ENCODE measurements at regions of chr14 and their contacts with region 1.

Region 1: DNA sequence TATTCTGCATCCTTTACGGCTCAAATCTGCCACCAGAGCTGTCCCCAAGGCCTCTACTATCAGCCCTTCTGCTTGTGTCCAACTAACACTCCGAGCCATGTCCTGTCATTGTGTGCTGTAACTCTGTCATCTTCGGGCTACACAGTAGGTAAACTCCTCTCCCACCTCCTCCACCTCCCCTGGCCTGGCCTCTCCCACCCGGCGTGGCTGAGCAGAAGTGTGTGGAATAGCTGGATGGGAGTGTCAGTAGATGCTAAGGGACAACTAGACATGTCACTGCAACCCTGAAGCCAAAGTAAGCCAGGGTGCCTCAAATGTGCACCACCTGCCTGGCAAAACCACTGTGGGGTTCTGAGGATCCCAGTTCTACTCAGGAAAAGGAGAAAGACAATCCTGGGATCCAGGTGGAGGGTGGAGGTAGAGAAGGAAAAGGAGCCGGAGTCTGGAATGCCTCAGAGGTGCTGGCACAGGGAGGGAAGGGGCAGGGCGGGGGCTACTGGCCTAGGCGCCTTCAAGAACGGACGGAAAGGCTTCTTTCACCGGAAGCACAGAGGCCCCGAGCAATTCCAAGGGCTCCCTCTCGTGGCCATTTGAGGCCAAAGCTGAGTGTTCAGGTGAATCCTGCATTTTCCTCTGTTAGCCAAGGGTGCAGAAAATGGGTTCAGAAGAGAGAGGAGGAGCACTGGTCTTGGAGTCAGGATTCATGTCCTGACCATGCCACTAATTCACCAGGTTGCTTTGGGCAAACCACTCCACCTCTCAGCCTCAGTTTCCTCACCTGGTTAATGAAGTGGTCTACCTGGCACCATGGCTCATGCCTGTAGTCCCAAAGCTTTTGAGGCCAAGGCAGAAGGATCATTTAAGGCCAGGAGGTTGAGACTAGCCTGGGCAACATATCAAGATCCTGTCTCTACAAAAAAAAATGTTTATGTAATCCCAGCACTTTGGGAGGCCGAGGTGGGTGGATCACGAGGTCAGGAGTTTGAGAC is 20.5 kb upstream of the FAM181A start:
- DNase-seq: peak; percentile 70 to 86
- H3K4me3 ChIP-seq: no peak overlapping the region
- H3K4me1 ChIP-seq: no peaks in the 10 kb centered on the region
- H3K27me3 ChIP-seq: no peaks in the 10 kb centered on the region

Region 2: DNA sequence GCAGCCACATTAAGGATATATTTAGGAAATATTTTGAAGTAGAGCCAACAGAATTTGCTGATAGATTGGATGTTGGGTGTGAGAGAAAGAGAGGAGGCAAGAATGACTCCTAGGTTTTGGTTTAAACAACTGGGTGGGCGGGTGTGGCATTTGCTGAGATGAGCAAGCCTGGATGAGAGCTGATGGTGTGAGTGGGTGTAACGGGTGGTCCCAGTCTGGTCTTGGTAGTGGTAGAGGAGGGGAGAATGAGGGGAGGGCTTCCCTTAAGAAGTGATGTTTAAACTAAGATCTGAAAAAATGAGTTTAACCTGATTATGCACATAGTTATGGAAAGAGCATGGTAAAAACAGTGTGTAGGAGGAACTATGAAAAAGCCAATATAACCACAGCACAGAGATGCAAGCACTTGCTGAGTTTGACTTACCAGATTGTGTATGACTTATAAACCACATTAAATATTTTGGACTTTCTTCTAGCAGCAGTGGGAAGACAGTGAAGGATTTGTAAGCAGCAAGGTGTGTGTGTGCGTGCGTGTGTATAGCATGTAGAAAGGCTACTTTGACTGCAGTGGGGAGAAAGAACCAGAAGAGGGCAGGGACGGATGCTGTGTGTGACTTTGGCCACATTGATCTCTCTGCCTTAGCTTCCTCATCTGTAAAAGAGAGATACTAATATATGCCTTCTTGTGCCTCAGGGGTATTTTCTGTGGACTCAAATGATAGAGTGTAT is 258.0 kb before region 1 on chr14:
- in situ Hi-C with region 1: loop called (anchors 5 kb)
- DNase-seq: peak; percentile 54 to 59
- H3K4me3 ChIP-seq: no peak overlapping the region
- H3K4me1 ChIP-seq: no peaks in the 10 kb centered on the region
- H3K27me3 ChIP-seq: peaks cover 8% of the 10 kb centered on the region; the same call in 1 of the 2 replicates

Region 3: GRCh38 chr14:93729993-93730392 is 176.6 kb before region 1 on chr14:
- in situ Hi-C with region 1: no loop called
- DNase-seq: no peak
- H3K4me3 ChIP-seq: no peak overlapping the region
- H3K4me1 ChIP-seq: no peaks in the 10 kb centered on the region
- H3K27me3 ChIP-seq: no peaks in the 10 kb centered on the region

Region 4: DNA sequence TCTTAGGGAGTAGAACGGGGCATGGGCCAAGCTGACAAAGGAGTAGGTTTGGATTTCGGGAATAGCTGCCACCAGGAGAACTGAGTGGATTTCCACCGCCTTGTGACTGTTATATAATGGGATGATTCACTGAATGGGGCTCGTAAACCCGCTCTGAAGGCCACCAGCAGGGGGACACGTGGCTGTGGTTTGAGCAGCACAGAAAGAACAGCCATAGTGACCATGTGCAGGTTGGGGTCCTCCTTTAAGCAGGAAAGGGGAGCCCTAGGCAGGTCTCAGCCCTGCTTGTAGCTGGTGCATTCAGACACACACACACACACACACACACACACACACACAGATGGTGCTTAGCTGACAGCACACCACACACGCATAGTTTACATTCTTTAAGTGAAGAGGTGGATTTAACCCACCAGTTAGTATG is 78.4 kb after region 1 on chr14:
- in situ Hi-C with region 1: no loop called
- DNase-seq: peak; percentile 31 to 70
- H3K4me3 ChIP-seq: no peak overlapping the region
- H3K4me1 ChIP-seq: peaks cover 5% of the 10 kb centered on the region
- H3K27me3 ChIP-seq: no peaks in the 10 kb centered on the region